Natural killer cell (primary cell): ENCODE measurements at regions of chr6 and their contacts with region 1.

Region 1: GRCh38 chr6:80338201-80338836 is 231.8 kb downstream of the BCKDHB start:
- DNase-seq: peak; percentile 65 to 71
- ATAC-seq: peak; percentile 70 to 92 (median 90)
- H3K4me3 ChIP-seq: no peak overlapping the region
- H3K4me3 Mint-ChIP-seq: no peak overlapping the region
- H3K27ac ChIP-seq: no peak overlapping the region
- H3K27ac Mint-ChIP-seq: no peak overlapping the region
- H3K4me1 ChIP-seq: no peaks in the 10 kb centered on the region
- H3K4me1 Mint-ChIP-seq: peaks cover 6 to 11% of the 10 kb centered on the region in 2 donors
- H3K27me3 ChIP-seq: no peaks in the 10 kb centered on the region
- H3K27me3 Mint-ChIP-seq: no peaks in the 10 kb centered on the region
- CTCF ChIP-seq: peak; percentile 77

Region 2: GRCh38 chr6:80382811-80383210 is 44.5 kb after region 1 on chr6:
- intact Hi-C with region 1: no loop called
- DNase-seq: no peak
- ATAC-seq: no peak
- H3K4me3 ChIP-seq: no peak overlapping the region
- H3K4me3 Mint-ChIP-seq: no peak overlapping the region
- H3K27ac ChIP-seq: no peak overlapping the region
- H3K27ac Mint-ChIP-seq: no peak overlapping the region
- H3K4me1 ChIP-seq: no peaks in the 10 kb centered on the region
- H3K4me1 Mint-ChIP-seq: no peaks in the 10 kb centered on the region
- H3K27me3 ChIP-seq: no peaks in the 10 kb centered on the region
- H3K27me3 Mint-ChIP-seq: no peaks in the 10 kb centered on the region
- CTCF ChIP-seq: no peak

Region 3: GRCh38 chr6:80594461-80594860 is 256.1 kb after region 1 on chr6:
- intact Hi-C with region 1: no loop called
- DNase-seq: no peak
- ATAC-seq: no peak
- H3K4me3 ChIP-seq: no peak overlapping the region
- H3K4me3 Mint-ChIP-seq: no peak overlapping the region
- H3K27ac ChIP-seq: no peak overlapping the region
- H3K27ac Mint-ChIP-seq: no peak overlapping the region
- H3K4me1 ChIP-seq: no peaks in the 10 kb centered on the region
- H3K4me1 Mint-ChIP-seq: no peaks in the 10 kb centered on the region
- H3K27me3 ChIP-seq: no peaks in the 10 kb centered on the region
- H3K27me3 Mint-ChIP-seq: peaks cover 2 to 9% of the 10 kb centered on the region in 2 donors
- CTCF ChIP-seq: no peak

Region 4: DNA sequence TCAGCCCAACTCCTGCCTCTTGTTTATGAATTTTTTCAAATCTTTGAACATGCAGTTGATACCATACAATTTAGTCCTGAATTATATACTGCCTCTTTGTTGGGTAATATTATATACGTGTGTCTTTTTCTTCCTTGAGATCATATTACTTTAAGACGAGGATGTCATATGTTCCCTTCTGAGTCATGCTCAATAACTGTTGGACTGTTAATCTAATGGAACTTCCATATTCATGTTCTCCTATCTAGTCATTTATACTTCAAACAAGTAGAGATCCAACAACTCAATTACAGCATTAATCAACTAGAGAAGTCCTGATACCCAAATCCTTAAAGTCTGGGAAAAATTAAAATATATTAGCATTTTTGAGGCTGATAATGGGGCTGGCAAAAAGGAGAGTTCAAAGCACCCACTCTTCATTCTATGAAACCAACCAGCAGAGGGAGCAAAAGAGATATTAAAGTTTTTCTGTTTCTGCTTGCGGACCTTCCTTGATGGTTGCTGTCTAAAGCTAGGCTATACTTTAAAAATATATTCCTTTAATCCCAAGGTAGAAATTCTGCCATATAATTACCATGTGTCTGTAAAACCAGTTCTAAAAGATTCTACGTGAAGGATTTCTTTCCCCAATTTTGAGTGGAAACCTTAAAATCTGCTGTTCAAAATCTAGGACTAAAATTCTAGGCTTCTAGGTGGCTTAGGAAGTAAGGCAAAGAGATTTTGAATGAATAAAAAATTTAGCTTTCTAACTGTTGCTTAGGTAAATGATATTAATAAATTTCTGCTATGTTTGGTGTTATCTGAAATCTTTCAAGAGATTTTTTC is 267.1 kb after region 1 on chr6:
- intact Hi-C with region 1: loop called (anchors 5 kb)
- DNase-seq: peak in 1 of 2 donors; percentile 31
- ATAC-seq: peak in 2 of 3 donors; percentile 55
- H3K4me3 ChIP-seq: no peak overlapping the region
- H3K4me3 Mint-ChIP-seq: no peak overlapping the region
- H3K27ac ChIP-seq: no peak overlapping the region
- H3K27ac Mint-ChIP-seq: no peak overlapping the region
- H3K4me1 ChIP-seq: no peaks in the 10 kb centered on the region
- H3K4me1 Mint-ChIP-seq: no peaks in the 10 kb centered on the region
- H3K27me3 ChIP-seq: no peaks in the 10 kb centered on the region
- H3K27me3 Mint-ChIP-seq: no peaks in the 10 kb centered on the region
- CTCF ChIP-seq: peak; percentile 61